ENCODE measurements at regions of chr17 and their contacts with region 1.

Region 1: GRCh38 chr17:82414548-82415281 is 3.4 kb upstream of the HEXD start:
- DNase-seq: peak; percentile 56 to 84
- H3K4me3 ChIP-seq: no peak overlapping the region
- H3K4me1 ChIP-seq: peaks cover 13% of the 10 kb centered on the region
- H3K27me3 ChIP-seq: no peaks in the 10 kb centered on the region

Region 2: DNA sequence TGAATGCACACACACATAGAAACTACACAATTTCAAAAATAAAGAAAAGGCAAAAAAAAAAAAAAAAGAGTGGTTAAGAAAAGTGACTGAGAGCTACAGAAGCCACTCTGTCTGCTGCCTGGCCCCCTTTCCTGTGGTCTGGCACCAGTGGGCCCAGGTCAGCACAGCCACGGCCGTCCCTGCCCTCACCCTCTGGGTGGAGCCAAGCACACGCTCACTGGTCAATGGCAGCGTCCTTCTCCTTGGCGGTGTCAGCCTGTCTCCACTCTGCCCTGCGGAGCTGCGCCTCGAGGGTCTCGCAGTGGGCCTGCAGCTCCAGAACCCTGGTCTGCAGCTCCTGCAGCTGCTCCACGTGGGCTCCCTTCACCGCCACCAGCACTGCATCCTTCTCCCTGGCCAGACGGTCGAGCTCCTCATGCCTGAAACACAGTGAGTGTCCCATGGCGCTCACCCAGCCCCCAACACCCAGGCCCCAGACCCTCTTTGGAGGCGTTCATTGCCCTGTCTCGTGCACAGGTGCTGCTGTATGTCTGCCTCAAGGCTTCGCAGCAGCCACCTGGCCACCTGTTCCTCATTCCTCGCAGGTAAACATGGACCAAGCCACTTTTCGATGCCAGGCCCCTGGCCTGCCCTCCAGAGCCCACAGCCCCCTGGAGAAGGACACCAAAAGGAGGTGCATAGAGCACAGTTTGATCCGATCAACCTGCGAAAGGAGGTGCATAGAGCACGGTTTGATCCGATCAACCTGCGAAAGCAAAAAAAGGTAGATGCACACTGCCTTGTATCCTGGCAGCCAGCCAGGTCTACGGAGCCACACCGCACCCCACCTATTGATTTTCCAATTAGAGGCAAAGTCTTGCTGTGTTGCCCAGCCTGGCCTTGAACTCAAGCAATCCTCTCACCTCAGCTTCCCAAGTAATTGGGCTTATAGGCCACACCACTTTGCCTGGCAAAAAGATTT is 226.4 kb before region 1 on chr17:
- in situ Hi-C with region 1: no loop called
- DNase-seq: no peak
- H3K4me3 ChIP-seq: no peak overlapping the region
- H3K4me1 ChIP-seq: no peaks in the 10 kb centered on the region
- H3K27me3 ChIP-seq: no peaks in the 10 kb centered on the region

Region 3: DNA sequence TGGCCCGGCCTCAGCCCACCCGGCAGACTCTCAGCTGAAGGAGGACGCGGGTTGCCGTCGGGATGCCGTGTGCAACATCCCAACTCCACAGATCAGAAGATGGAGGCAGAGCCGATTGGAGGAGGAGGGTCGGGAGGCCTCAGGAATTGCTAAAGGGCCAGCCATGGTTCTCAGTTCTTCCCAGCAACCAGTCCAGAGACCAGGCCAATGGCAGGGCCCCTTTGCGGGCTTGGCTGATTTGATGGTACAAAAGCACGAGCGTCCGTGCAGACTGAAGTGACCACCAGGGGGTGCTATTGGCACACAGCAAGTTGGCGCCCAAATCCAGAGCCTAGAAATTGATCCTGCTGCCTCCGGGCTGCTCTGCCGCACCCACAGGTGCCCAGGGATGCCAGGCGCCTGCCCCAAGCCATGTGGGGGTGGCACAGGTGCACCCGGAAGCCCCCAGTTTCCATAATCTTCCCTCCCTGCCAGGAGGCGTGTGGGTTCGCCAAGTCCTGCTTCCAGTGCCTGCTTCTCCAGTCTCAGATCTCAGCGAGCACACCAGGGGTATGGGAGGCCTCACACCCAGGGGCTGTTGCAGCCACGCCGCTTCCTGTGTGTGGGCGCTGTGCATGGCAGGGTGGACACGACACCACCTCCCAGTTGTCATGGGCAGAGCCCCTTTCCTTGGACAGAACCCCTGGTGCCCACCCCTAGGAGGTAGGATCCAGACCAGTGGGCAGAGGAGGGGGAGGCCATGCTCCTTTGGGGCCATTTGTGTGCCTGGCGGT is 62.8 kb before region 1 on chr17:
- in situ Hi-C with region 1: loop called (anchors 5 kb)
- DNase-seq: peak; percentile 75 to 91
- H3K4me3 ChIP-seq: no peak overlapping the region
- H3K4me1 ChIP-seq: no peaks in the 10 kb centered on the region
- H3K27me3 ChIP-seq: no peaks in the 10 kb centered on the region